Dorsolateral prefrontal cortex (tissue), 120 donors: ENCODE measurements at regions of chr16 and their contacts with region 1.

Region 1: GRCh38 chr16:25126820-25127232 is 15.3 kb downstream of the LCMT1 start:
- DNase-seq: peak in 6 of 10 donors; percentile 45 to 63 (median 60)
- H3K4me3 ChIP-seq: no peak overlapping the region
- H3K27ac ChIP-seq: peak overlapping the region in 6 of 59 donors; percentile 10 to 42 (median 26)
- H3K27me3 ChIP-seq: no peaks in the 10 kb centered on the region
- CTCF ChIP-seq: peak in 50 of 56 donors; percentile 16 to 61 (median 43)

Region 2: DNA sequence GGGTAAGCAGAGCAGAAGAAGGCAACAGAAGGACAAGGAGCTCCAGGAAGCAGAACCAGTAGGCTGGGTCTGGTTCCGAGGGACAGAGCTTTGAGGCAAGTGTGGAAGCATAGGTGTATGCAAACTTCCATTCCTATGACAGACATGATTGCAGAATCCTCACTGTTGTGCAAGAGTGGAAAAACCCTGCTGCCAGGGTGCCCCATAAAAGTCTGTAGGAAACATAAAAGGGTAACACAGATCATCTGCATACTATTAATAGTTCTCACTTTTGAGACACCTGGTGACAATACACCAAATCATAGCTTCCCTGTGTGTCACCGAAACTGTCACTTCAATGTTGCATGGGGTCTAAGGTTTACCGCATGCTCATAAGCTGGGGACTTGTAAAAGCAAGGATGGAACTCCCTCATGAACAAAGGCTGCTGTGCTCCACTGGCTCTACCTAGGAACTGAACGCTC is 151.4 kb before region 1 on chr16:
- intact Hi-C with region 1: no loop called
- DNase-seq: no peak
- H3K4me3 ChIP-seq: no peak overlapping the region
- H3K27ac ChIP-seq: peak overlapping the region in 16 of 59 donors; percentile 1 to 85 (median 46)
- H3K27me3 ChIP-seq: no peaks in the 10 kb centered on the region
- CTCF ChIP-seq: no peak

Region 3: GRCh38 chr16:25051406-25052150 is 75.2 kb before region 1 on chr16:
- intact Hi-C with region 1: loop called (anchors 2 to 5 kb)
- DNase-seq: no peak
- H3K4me3 ChIP-seq: peak overlapping the region in 36 of 59 donors; percentile 1 to 45 (median 26)
- H3K27ac ChIP-seq: peak overlapping the region in 44 of 59 donors; percentile 2 to 84 (median 40)
- H3K27me3 ChIP-seq: no peaks in the 10 kb centered on the region
- CTCF ChIP-seq: no peak